ENCODE measurements at regions of chr6 and their contacts with region 1.

Region 1: GRCh38 chr6:28838634-28839442 is 84.9 kb downstream of the TRIM27 start:
- DNase-seq: peak; percentile 83
- H3K4me3 ChIP-seq: peak overlapping the region; percentile 53 to 58
- H3K27ac ChIP-seq: peak overlapping the region; percentile 80 to 81
- H3K4me1 ChIP-seq: no peaks in the 10 kb centered on the region
- H3K27me3 ChIP-seq: peaks cover 3% of the 10 kb centered on the region
- CTCF ChIP-seq: peak; percentile 45 to 64 (median 52)
- POLR2A ChIP-seq: no peak

Region 2: GRCh38 chr6:28865401-28866204 is 26.8 kb after region 1 on chr6:
- intact Hi-C with region 1: loop called (anchors 2 kb)
- DNase-seq: no peak
- H3K4me3 ChIP-seq: peak overlapping the region in 1 of 2 donors; percentile 61
- H3K27ac ChIP-seq: peak overlapping the region in 1 of 2 donors; percentile 85
- H3K4me1 ChIP-seq: no peaks in the 10 kb centered on the region
- H3K27me3 ChIP-seq: no peaks in the 10 kb centered on the region
- CTCF ChIP-seq: no peak
- POLR2A ChIP-seq: no peak

Region 3: DNA sequence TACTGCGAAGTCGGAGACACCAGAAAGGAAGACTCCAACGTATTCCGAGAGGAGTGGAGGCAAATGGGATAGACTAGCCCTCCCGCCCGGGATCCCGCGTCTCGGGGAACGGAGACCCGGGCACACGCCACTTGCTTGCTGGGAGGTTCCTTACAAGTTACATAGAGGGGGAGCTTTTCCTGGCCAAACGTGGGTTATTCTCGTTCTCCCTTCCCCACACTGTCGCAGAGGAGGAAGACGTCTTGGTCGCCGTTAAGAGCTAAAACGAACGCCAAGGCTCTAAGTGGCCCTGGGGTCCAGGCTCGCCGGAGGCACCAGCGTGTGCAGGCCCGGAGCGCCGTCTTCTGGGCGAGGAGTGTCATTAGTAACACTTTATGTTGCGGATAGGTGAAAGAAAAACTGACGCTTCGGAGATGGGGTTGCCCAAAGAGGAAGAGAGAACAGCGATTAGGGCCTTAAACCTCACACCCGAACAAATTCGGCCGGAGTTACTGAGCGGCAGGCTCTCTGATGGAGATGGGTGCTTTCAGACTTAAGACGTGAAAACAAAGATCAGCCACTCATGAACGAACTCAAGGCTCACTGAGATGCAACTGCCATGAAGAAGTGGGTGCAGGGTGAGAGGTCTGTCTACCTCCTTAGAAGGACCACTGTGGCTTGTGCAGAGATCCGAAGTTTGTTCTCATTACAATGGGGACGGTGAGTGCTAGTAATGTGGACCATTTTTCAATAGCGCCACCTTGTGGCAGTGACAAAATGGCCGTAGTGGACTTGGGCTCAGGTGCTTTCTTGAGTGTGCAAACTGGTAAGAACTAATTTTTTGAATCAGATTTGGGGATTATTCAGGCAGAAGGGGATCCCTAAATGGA is 178.0 kb after region 1 on chr6:
- intact Hi-C with region 1: loop called (anchors 2 kb)
- DNase-seq: peak; percentile 86
- H3K4me3 ChIP-seq: peak overlapping the region; percentile 31 to 47
- H3K27ac ChIP-seq: peak overlapping the region; percentile 37 to 54
- H3K4me1 ChIP-seq: no peaks in the 10 kb centered on the region
- H3K27me3 ChIP-seq: no peaks in the 10 kb centered on the region
- CTCF ChIP-seq: peak; percentile 71 to 87 (median 80)
- POLR2A ChIP-seq: no peak

Measured in prostate gland (tissue), 2 donors.